Natural killer cell (primary cell): ENCODE measurements at regions of chr11 and their contacts with region 1.

Region 1: DNA sequence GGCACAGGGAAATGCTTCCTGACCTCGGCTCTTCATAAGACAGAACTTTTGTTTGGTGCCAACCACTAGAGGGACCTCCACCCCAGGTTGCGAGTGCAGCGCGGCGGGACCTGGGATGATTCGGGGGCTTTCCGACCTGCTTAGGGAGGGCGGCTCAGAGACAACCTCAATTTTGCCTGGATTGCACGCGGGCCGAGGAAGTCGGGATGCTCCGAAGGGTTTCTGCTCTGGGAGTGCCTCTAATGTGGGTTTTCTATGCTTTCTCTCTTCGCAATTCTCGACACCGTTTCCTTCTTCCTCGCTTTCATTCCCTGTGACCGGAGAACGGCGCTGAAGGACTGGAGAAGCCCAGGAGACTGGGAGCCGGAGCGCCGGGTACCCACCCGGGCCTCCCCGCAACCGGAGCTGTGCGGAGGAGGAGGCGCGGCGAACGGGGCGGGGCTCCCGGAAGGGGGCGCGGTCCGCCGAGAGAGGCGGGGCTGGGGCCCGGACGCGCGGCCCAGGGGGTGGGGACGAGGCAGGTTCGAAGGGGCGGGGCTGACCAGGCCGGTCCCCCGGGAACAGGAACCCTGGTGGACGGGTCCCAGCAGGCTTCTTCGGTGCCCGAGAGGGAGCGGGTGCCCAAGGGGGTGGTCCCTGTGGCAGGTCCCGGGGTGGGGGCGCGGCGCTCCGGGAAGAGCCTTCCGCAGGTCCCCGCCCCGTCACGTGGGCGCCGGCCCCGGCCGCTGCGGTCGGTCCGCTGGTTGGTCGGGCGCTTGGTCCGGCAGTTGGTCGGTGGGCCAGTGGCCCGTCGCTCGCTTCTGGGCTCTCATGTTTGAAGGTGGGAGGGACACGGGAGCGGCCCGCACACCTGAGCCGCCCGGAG is at the start of gene PPFIBP2:
- DNase-seq: peak; percentile 89 to 90
- ATAC-seq: peak; percentile 87 to 93 (median 90)
- H3K4me3 ChIP-seq: peak within 1 kb of the TSS; percentile 98
- H3K4me3 Mint-ChIP-seq: peak within 1 kb of the TSS; percentile 96
- H3K27ac ChIP-seq: peak within 1 kb of the TSS; percentile 99
- H3K27ac Mint-ChIP-seq: peak within 1 kb of the TSS; percentile 90
- H3K4me1 ChIP-seq: peaks cover 23% of the 10 kb centered on the region
- H3K4me1 Mint-ChIP-seq: peaks cover 12 to 39% of the 10 kb centered on the region in 2 donors
- H3K27me3 ChIP-seq: peaks cover 3% of the 10 kb centered on the region
- H3K27me3 Mint-ChIP-seq: no peaks in the 10 kb centered on the region
- CTCF ChIP-seq: peak; percentile 85
- total RNA-seq, gene PPFIBP2: 15.1 to 23.7 (median 23.1) TPM

Region 2: GRCh38 chr11:7376386-7376785 is 137.1 kb before region 1 on chr11:
- intact Hi-C with region 1: no loop called
- DNase-seq: no peak
- ATAC-seq: no peak
- H3K4me3 ChIP-seq: no peak overlapping the region
- H3K4me3 Mint-ChIP-seq: no peak overlapping the region
- H3K27ac ChIP-seq: no peak overlapping the region
- H3K27ac Mint-ChIP-seq: no peak overlapping the region
- H3K4me1 ChIP-seq: no peaks in the 10 kb centered on the region
- H3K4me1 Mint-ChIP-seq: no peaks in the 10 kb centered on the region
- H3K27me3 ChIP-seq: no peaks in the 10 kb centered on the region
- H3K27me3 Mint-ChIP-seq: peaks cover 14 to 30% of the 10 kb centered on the region in 2 donors
- CTCF ChIP-seq: no peak

Region 3: DNA sequence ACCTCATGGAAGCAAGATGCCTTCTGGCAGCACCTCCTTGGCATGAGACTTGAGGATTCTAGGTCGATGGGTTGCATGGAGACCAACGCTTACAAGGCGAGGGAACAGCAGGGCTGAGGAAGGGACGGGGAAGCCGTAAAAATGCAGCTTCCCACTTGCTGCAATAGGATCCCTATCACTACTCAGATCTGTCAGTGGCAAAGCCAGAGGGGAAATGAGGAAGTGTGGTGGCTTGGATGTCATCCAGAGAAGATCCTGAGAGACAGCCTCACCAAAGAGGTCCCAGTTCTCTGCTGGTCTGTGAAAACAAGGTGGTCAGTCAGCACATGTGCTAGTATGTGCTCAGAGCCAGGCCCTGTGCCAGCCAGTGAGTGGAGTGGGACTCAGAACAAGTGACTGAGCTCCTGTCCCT is 137.7 kb after region 1 on chr11:
- intact Hi-C with region 1: no loop called
- DNase-seq: no peak
- ATAC-seq: no peak
- H3K4me3 ChIP-seq: no peak overlapping the region
- H3K4me3 Mint-ChIP-seq: no peak overlapping the region
- H3K27ac ChIP-seq: no peak overlapping the region
- H3K27ac Mint-ChIP-seq: no peak overlapping the region
- H3K4me1 ChIP-seq: no peaks in the 10 kb centered on the region
- H3K4me1 Mint-ChIP-seq: no peaks in the 10 kb centered on the region
- H3K27me3 ChIP-seq: no peaks in the 10 kb centered on the region
- H3K27me3 Mint-ChIP-seq: no peaks in the 10 kb centered on the region
- CTCF ChIP-seq: no peak

Region 4: GRCh38 chr11:7665473-7666291 is 152.2 kb after region 1 on chr11:
- intact Hi-C with region 1: loop called (anchors 1 kb)
- DNase-seq: peak; percentile 64 to 83
- ATAC-seq: peak; percentile 93 to 99 (median 97)
- H3K4me3 ChIP-seq: no peak overlapping the region
- H3K4me3 Mint-ChIP-seq: no peak overlapping the region
- H3K27ac ChIP-seq: no peak overlapping the region
- H3K27ac Mint-ChIP-seq: no peak overlapping the region
- H3K4me1 ChIP-seq: peaks cover 5% of the 10 kb centered on the region
- H3K4me1 Mint-ChIP-seq: peaks cover 0 to 7% of the 10 kb centered on the region in 2 donors
- H3K27me3 ChIP-seq: no peaks in the 10 kb centered on the region
- H3K27me3 Mint-ChIP-seq: peaks cover 0 to 2% of the 10 kb centered on the region in 2 donors
- CTCF ChIP-seq: peak; percentile 83

Region 5: DNA sequence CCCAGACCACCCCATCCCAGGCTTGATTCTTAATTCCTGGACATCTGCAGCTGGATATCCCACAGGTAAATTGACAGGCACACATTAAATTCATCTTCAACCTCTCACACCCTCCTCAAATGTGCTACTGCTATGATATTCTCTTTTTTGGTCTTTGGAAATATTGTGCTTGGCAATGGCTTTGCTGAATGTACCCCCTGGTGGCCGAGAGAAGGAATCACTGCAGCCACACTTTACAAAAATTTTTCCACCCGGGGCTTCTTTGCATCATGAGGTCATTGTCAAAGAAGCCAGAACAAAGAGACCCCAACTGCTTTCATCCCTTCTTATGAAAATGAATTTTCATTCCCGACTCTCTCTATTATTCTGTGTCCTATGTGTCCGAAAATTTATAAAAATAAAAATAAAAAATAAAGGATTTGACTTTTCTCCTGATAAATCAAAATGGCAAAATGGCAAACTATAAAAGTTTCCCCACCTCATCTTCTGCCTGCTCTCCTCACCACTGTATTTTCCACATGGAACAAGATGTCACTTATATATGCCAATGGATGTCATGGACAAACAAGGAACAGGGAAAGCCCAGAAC is 174.9 kb after region 1 on chr11:
- intact Hi-C with region 1: loop called (anchors 1 kb)
- DNase-seq: peak in 1 of 2 donors; percentile 59
- ATAC-seq: peak in 2 of 3 donors; percentile 44 to 54
- H3K4me3 ChIP-seq: no peak overlapping the region
- H3K4me3 Mint-ChIP-seq: no peak overlapping the region
- H3K27ac ChIP-seq: no peak overlapping the region
- H3K27ac Mint-ChIP-seq: no peak overlapping the region
- H3K4me1 ChIP-seq: no peaks in the 10 kb centered on the region
- H3K4me1 Mint-ChIP-seq: no peaks in the 10 kb centered on the region
- H3K27me3 ChIP-seq: peaks cover 3% of the 10 kb centered on the region
- H3K27me3 Mint-ChIP-seq: peaks cover 25 to 46% of the 10 kb centered on the region in 2 donors
- CTCF ChIP-seq: peak; percentile 74

Region 6: GRCh38 chr11:7804226-7804625 is 290.8 kb after region 1 on chr11:
- intact Hi-C with region 1: no loop called
- DNase-seq: no peak
- ATAC-seq: no peak
- H3K4me3 ChIP-seq: no peak overlapping the region
- H3K4me3 Mint-ChIP-seq: no peak overlapping the region
- H3K27ac ChIP-seq: no peak overlapping the region
- H3K27ac Mint-ChIP-seq: no peak overlapping the region
- H3K4me1 ChIP-seq: no peaks in the 10 kb centered on the region
- H3K4me1 Mint-ChIP-seq: no peaks in the 10 kb centered on the region
- H3K27me3 ChIP-seq: no peaks in the 10 kb centered on the region
- H3K27me3 Mint-ChIP-seq: peaks cover 0 to 2% of the 10 kb centered on the region in 2 donors
- CTCF ChIP-seq: no peak

Region 7: GRCh38 chr11:7986768-7987559 is 473.5 kb after region 1 on chr11 and contains the start of gene EIF3F:
- intact Hi-C with region 1: loop called (anchors 10 kb)
- DNase-seq: peak; percentile 73 to 98
- ATAC-seq: peak; percentile 95 to 99 (median 97)
- H3K4me3 ChIP-seq: peak within 1 kb of the TSS; percentile 64
- H3K4me3 Mint-ChIP-seq: peak within 1 kb of the TSS; percentile 94
- H3K27ac ChIP-seq: peak within 1 kb of the TSS; percentile 59
- H3K27ac Mint-ChIP-seq: peak within 1 kb of the TSS; percentile 92 to 95
- H3K4me1 ChIP-seq: peaks cover 13% of the 10 kb centered on the region
- H3K4me1 Mint-ChIP-seq: peaks cover 47 to 54% of the 10 kb centered on the region in 2 donors
- H3K27me3 ChIP-seq: no peaks in the 10 kb centered on the region
- H3K27me3 Mint-ChIP-seq: peaks cover 0 to 6% of the 10 kb centered on the region in 2 donors
- CTCF ChIP-seq: peak; percentile 61
- total RNA-seq, gene EIF3F: 232 to 250 (median 247) TPM